Breast epithelium (tissue), 4 donors: ENCODE measurements at regions of chr3 and their contacts with region 1.

Region 1: DNA sequence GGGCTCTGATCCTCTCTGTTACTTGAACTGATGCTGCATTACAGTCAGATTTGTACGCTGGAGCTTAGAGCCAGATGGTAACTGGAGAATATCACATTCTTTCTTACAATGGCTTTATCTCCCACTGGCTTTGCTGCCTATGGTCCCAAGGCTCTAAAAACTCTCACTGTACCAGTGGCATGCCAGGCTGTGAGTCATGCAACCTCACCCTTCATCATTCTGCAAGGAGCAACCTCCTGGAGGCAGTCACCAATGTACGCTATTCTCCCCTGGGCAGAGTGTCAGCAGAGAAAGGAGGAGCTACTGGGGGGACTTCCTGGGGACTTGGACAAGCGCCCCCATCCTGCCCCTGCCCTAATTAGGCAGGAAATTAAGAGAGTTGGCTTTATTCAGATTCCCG is 97.9 kb upstream of the EIF1B start:
- DNase-seq: no peak
- H3K4me3 ChIP-seq: no peak overlapping the region
- H3K27ac ChIP-seq: no peak overlapping the region
- H3K4me1 ChIP-seq: no peaks in the 10 kb centered on the region
- H3K27me3 ChIP-seq: no peaks in the 10 kb centered on the region
- CTCF ChIP-seq: no peak
- POLR2A ChIP-seq: no peak

Region 2: DNA sequence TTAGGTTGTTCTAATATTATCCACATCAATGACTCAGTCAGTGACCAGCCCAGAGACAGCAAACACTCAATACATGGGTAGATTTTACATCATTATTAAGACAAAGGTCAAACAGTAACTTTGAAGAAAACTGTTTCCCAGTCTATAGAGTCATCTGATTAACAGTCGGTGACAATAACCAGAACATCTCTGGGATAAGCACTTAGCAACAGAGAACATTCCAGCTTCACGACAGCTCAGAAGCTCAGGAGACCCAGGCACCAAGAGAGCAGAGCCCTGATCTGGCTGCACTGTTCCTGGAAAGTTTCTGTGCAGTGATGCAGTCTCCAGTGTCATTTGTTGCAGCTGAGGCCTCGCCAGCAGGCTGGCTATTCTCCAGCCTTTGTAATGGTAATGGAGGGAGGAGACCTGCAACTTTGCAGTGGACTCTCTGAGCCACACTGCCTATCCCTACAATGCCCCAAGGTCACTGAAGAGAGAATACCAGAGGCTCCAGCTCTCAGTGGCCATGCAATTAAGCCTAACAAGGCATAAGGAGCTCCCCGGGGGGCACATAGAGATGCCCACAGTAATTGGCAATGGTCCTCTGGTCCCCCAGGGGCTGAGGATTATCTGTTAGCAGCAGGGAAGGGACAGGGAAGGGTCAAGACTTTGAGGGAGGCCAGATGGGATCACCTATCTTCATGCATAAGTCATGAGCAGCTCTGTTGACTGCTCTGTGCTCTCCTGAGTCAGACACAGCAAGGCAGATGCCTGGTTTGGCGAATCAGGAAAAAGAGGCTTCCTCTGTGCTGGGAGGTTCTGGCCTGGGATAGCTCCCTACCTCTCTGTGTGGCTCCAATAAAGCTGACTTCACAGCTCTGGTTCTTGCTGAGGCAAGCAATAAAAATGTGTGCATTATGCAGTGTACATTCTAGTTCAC is 1151.3 kb after region 1 on chr3:
- intact Hi-C with region 1: no loop called
- DNase-seq: no peak
- H3K4me3 ChIP-seq: no peak overlapping the region
- H3K27ac ChIP-seq: no peak overlapping the region
- H3K4me1 ChIP-seq: no peaks in the 10 kb centered on the region
- H3K27me3 ChIP-seq: no peaks in the 10 kb centered on the region
- CTCF ChIP-seq: no peak
- POLR2A ChIP-seq: no peak

Region 3: GRCh38 chr3:41819226-41819625 is 1607.6 kb after region 1 on chr3:
- intact Hi-C with region 1: loop called (anchors 5 kb)
- DNase-seq: no peak
- H3K4me3 ChIP-seq: no peak overlapping the region
- H3K27ac ChIP-seq: no peak overlapping the region
- H3K4me1 ChIP-seq: no peaks in the 10 kb centered on the region
- H3K27me3 ChIP-seq: no peaks in the 10 kb centered on the region
- CTCF ChIP-seq: no peak
- POLR2A ChIP-seq: no peak